Right cardiac atrium (tissue), 5 donors: ENCODE measurements at regions of chr5 and their contacts with region 1.

Region 1: GRCh38 chr5:150217873-150218692 is 28.2 kb downstream of the SLC6A7 start:
- DNase-seq: peak; percentile 82 to 90 (median 89)
- ATAC-seq: peak; percentile 79
- H3K4me3 ChIP-seq: no peak overlapping the region
- H3K27ac ChIP-seq: no peak overlapping the region
- H3K4me1 ChIP-seq: peaks cover 2% of the 10 kb centered on the region
- H3K27me3 ChIP-seq: no peaks in the 10 kb centered on the region

Region 2: DNA sequence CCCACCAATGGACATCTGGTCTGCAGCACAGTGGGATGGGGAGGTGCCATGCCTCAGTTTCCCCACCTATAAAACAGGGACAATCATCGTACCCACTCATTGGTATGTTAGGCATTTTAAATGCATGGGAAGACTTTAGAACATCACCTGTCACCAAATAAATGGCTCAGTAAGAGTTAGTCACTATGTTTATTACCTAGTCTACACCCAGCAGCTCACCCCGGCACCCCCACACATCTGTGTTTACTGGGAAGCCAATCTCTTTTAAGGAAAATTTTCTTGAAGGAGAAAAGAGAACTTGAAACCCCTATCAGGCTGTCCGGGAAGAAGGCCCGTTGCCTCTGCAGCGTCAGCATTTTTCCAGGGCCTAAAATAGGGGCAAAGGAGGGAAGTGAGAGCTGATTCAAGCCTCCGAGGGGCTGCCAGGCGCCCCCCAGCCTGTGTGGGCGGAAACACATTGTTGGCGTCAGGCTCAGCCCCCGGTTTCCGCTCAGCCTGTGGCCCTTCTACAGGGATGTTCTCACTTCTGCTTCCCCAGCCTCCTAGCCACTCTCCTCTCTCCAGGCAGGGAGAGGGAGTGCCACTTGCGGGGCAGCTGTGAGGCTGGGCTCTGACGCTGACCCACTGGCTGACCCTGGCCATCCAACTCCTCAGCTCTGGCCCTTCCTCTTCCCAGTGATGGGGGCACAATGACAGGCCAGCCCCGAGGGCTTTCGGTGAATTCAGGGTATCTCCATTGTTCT is 136.4 kb before region 1 on chr5:
- intact Hi-C with region 1: no loop called
- DNase-seq: peak; percentile 71 to 89 (median 86)
- ATAC-seq: peak; percentile 82
- H3K4me3 ChIP-seq: no peak overlapping the region
- H3K27ac ChIP-seq: no peak overlapping the region
- H3K4me1 ChIP-seq: no peaks in the 10 kb centered on the region
- H3K27me3 ChIP-seq: no peaks in the 10 kb centered on the region

Region 3: DNA sequence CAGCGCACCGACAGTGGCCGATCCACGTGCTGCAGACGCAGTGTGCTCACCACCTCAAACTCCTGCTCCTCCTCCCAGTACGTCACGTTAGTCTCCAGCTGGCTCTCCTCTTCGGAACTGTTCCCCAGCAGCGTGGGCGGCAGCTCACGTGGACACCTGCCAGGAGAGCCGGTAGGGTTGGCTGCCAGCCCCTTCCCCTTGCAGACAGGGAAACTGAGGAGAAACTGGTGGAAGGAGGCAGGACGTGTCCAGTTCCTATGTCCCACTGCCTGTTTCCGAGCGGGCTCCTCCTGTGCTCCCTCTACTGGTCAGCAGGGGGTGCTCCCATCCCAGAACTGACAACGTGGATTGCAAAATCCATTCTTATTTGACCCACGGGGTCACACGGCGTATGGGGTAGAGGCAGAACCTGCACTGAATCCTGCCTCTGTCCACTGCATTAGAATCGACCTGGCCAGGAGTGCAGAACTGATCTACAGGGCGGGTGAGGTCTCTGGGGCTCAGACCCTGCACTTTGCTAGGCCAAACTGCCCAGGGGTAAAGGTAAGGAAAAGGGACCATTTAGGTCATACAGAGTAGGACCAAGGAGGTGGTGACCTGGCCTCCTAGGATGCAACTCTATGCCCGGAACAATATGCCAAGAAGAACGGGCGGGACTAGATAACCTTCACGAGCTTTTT is 88.1 kb before region 1 on chr5:
- intact Hi-C with region 1: loop called (anchors 2 to 5 kb)
- DNase-seq: peak; percentile 77 to 90 (median 90)
- ATAC-seq: peak; percentile 80 to 85
- H3K4me3 ChIP-seq: no peak overlapping the region
- H3K27ac ChIP-seq: no peak overlapping the region
- H3K4me1 ChIP-seq: no peaks in the 10 kb centered on the region
- H3K27me3 ChIP-seq: no peaks in the 10 kb centered on the region

Region 4: GRCh38 chr5:150161242-150162141 is 56.6 kb before region 1 on chr5:
- intact Hi-C with region 1: loop called (anchors 1 to 10 kb)
- DNase-seq: peak; percentile 84 to 95 (median 93)
- ATAC-seq: peak; percentile 58 to 64
- H3K4me3 ChIP-seq: no peak overlapping the region
- H3K27ac ChIP-seq: peak overlapping the region; percentile 18
- H3K4me1 ChIP-seq: peaks cover 7% of the 10 kb centered on the region
- H3K27me3 ChIP-seq: no peaks in the 10 kb centered on the region

Region 5: DNA sequence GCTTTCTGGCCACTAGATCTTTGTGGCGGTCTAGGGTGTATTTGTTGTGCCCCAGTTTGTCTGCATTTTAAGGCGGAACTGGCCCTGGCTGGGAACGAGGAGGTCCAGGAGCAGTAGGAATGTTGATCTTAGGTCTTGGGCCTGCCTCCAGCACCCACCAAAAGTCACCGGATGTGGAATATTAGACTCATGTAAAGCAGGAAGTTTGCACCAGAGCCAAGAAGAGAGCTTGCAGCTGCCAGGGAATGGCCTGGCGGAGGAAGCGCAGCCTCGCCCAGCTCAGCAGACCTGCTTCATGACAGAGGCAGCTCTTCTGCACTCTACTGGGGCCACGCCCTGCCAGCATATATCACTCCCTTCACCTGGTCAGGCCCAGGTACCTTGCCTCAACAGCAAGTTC is 805.6 kb after region 1 on chr5:
- intact Hi-C with region 1: no loop called
- DNase-seq: peak; percentile 77 to 90 (median 88)
- ATAC-seq: peak; percentile 44 to 69
- H3K4me3 ChIP-seq: peak overlapping the region; percentile 68
- H3K27ac ChIP-seq: peak overlapping the region; percentile 93
- H3K4me1 ChIP-seq: peaks cover 39% of the 10 kb centered on the region
- H3K27me3 ChIP-seq: no peaks in the 10 kb centered on the region